ENCODE measurements at regions of chr7 and their contacts with region 1.

Region 1: DNA sequence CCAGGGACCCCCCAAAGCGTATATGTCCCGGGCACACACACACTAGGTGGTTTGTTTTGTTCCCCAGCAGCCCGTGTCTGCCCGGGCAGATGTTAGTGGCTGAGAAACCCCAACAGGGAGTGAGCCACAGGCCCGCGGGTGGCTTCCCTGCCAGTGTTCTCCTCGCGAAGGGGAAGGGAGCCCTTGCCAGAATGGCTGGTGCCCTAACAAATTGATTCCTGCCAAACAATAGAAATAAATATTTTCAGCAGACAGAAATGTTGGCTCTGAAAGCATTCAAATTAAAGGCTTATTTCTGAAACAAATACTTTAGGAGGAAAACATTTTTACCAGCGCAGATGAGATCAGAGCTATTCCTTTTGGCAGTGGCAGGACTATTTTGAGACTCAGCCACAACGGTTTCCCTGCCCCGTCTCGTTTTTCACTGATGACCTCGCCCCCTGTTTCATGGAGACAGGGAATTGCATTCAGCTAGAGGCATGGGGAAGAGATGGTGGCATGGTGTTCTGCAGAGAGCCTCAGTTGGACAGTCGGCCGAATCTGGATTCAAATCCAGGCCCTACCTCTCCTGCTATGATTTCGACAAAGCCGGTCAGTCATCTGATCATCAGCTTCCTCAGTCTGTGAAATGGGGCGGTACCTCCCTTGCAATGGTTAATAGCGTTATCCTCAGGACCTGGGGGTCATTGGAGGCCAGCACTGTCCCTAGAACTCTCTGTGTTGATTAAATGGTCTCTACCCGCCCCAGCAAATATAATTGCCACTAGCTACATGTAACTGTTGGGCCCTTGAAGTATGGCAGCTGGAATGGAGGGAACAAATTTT is 84.4 kb downstream of the CUX1 start:
- DNase-seq: no peak

Region 2: GRCh38 chr7:101856473-101857357 is 45.2 kb before region 1 on chr7:
- CTCF ChIA-PET with region 1: interaction called, 10 read pairs
- POLR2A ChIA-PET with region 1: no interaction called
- DNase-seq: peak; percentile 87